Caco-2 (cell line): ENCODE measurements at regions of chr4 and their contacts with region 1.

Region 1: GRCh38 chr4:1167247-1167949 is 5.0 kb downstream of the SPON2 start:
- DNase-seq: peak; percentile 85 to 86
- H3K4me3 ChIP-seq: peak overlapping the region; percentile 52
- H3K4me3 Mint-ChIP-seq: peak overlapping the region; percentile 72
- H3K27ac Mint-ChIP-seq: no peak overlapping the region
- H3K4me1 ChIP-seq: 0 out of 2 replicates have a peak, but pooled peaks cover 2% of the 10 kb centered on the region
- H3K4me1 Mint-ChIP-seq: peaks cover 7% of the 10 kb centered on the region
- H3K27me3 ChIP-seq: no peaks in the 10 kb centered on the region
- H3K27me3 Mint-ChIP-seq: peaks cover 2% of the 10 kb centered on the region
- CTCF ChIP-seq: peak; percentile 90 to 95

Region 2: GRCh38 chr4:1207603-1208265 is 40.3 kb after region 1 on chr4:
- CTCF ChIA-PET with region 1: no interaction called
- POLR2A ChIA-PET with region 1: no interaction called
- intact Hi-C with region 1: loop called (anchors 5 kb)
- DNase-seq: peak in 1 of 2 experiments; percentile 22
- H3K4me3 ChIP-seq: no peak overlapping the region
- H3K4me3 Mint-ChIP-seq: no peak overlapping the region
- H3K27ac Mint-ChIP-seq: no peak overlapping the region
- H3K4me1 ChIP-seq: no peaks in the 10 kb centered on the region
- H3K4me1 Mint-ChIP-seq: no peaks in the 10 kb centered on the region
- H3K27me3 ChIP-seq: no peaks in the 10 kb centered on the region
- H3K27me3 Mint-ChIP-seq: no peaks in the 10 kb centered on the region
- CTCF ChIP-seq: no peak

Region 3: GRCh38 chr4:1395941-1396806 is 228.8 kb after region 1 on chr4:
- CTCF ChIA-PET with region 1: no interaction called
- POLR2A ChIA-PET with region 1: interaction called, 18 read pairs
- intact Hi-C with region 1: no loop called
- DNase-seq: no peak
- H3K4me3 ChIP-seq: no peak overlapping the region
- H3K4me3 Mint-ChIP-seq: no peak overlapping the region
- H3K27ac Mint-ChIP-seq: no peak overlapping the region
- H3K4me1 ChIP-seq: no peaks in the 10 kb centered on the region
- H3K4me1 Mint-ChIP-seq: no peaks in the 10 kb centered on the region
- H3K27me3 ChIP-seq: no peaks in the 10 kb centered on the region
- H3K27me3 Mint-ChIP-seq: no peaks in the 10 kb centered on the region
- CTCF ChIP-seq: no peak